ENCODE measurements at regions of chr1 and their contacts with region 1.

Region 1: DNA sequence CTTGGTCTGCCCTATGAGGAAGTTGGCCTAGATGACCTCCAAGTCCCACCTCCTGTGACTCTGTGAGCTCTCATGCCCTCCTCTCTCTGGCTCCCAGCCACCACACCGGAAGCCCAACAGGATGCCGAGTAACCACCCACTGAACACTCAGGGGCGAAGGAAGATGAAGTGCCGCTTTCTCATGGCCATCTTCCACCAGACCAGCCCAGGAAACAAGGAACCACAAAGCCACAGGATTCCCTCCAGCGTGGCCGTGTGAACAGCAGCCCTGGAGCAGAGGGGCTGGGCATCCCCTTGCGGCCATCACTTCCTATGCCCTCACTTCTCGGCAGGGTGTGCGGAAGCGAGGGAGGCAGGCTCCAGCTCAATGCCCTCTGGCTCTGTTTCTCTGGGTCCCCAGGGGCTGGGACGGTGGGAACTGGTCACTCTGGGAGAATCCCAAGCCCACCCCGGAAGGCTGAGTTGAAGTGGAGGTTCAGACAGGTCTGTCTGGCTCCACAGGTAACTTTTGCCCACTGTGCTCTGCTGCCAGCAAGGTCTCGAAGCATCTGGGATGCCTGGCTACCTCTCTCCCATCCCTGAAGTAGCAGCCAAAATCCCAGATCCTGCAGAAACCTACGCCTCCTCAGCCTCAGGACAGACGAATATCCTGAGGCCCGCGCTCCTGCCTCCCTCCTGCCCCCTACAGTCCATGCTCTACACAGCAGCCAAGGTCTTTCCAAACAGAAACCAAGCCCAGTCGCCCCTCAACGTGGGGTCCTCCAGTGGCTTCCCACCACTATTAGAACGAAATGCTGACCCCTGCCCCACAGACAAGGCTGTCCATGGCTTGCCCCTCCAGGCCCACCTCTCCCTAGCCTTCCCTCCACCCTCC is 44.2 kb upstream of the ECE1 start:
- DNase-seq: peak; percentile 99 to 100 (median 100)
- H3K4me3 ChIP-seq: peak overlapping the region; percentile 11 to 84 (median 56)
- H3K27ac ChIP-seq: peak overlapping the region; percentile 56
- H3K4me1 ChIP-seq: peaks cover 20 to 72% (median 64%) of the 10 kb centered on the region in 4 experiments
- H3K27me3 ChIP-seq: peaks cover 0 to 4% (median 0%) of the 10 kb centered on the region in 5 experiments

Region 2: GRCh38 chr1:21261551-21262281 is 72.7 kb before region 1 on chr1:
- CTCF ChIA-PET with region 1: interaction called, 21 read pairs
- POLR2A ChIA-PET with region 1: no interaction called
- DNase-seq: peak; percentile 71 to 90 (median 82)
- H3K4me3 ChIP-seq: peak overlapping the region in 3 of 7 experiments; percentile 19 to 58 (median 27)
- H3K27ac ChIP-seq: peak overlapping the region in 1 of 2 experiments; percentile 27
- H3K4me1 ChIP-seq: peaks cover 0 to 25% (median 18%) of the 10 kb centered on the region in 4 experiments
- H3K27me3 ChIP-seq: peaks cover 0 to 3% (median 0%) of the 10 kb centered on the region in 5 experiments

Region 3: GRCh38 chr1:21468599-21468998 is 134.1 kb after region 1 on chr1:
- CTCF ChIA-PET with region 1: no interaction called
- POLR2A ChIA-PET with region 1: no interaction called
- DNase-seq: peak; percentile 55 to 86 (median 63)
- H3K4me3 ChIP-seq: no peak overlapping the region
- H3K27ac ChIP-seq: no peak overlapping the region
- H3K4me1 ChIP-seq: peaks cover 0 to 9% (median 0%) of the 10 kb centered on the region in 4 experiments
- H3K27me3 ChIP-seq: no peaks in the 10 kb centered on the region